ENCODE measurements at regions of chr10 and their contacts with region 1.

Region 1: GRCh38 chr10:58064714-58065528 is 202.8 kb downstream of the IPMK start:
- DNase-seq: peak in 4 of 5 donors; percentile 36 to 75 (median 64)
- H3K4me3 ChIP-seq: no peak overlapping the region
- H3K27ac ChIP-seq: no peak overlapping the region
- H3K4me1 ChIP-seq: no peaks in the 10 kb centered on the region
- H3K27me3 ChIP-seq: no peaks in the 10 kb centered on the region
- CTCF ChIP-seq: peak; percentile 69

Region 2: DNA sequence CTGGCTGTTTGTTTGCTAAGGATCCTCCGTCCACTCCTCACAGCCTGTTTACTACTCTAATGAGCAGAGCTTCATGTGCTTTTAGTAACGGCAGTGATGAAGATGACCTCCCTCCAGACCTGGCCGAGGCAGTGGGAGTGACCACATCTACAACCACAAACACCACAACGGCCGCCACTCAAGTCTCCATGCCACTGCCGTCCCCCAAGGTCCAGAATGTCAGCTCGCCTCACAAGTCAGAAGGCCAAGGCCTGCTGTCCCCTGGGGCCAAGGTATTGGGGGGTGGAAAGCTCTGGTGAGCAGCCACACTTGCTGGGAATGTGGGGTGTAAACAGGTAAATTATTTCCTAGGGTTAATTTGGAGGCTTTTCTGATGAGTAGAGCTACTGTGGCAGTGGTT is 723.6 kb before region 1 on chr10:
- intact Hi-C with region 1: loop called (anchors 10 kb)
- DNase-seq: peak in 1 of 5 donors; percentile 49
- H3K4me3 ChIP-seq: no peak overlapping the region
- H3K27ac ChIP-seq: no peak overlapping the region
- H3K4me1 ChIP-seq: no peaks in the 10 kb centered on the region
- H3K27me3 ChIP-seq: no peaks in the 10 kb centered on the region
- CTCF ChIP-seq: no peak

Region 3: DNA sequence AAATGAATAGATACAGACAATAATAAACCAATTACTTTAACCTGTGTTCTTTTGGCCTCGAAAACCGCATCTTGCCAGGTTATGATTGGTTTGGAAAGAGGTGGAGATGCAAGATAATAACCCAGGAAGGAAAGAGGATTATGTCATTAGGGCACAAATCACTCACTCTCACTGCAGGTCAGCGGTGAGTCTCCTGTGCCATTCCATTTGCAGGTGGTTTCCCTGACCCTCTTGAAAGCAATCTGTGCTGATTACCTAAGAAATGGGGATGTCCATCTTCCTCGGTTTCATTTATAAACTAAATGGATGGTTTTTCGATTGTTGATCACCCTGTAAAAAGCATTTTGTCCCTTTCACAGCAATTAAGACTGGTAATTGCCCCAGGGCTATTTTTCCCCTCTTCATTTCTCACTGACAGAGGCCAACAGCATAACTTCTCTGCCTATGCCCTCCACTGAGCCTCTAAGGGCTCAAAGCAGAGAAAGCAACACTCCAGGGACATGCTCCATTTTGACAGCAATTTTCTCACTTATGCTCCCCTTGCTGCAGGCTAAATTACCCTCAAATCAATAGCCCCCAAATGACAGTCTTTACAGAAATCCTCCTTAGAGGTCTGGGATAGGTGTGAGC is 54.7 kb before region 1 on chr10:
- intact Hi-C with region 1: no loop called
- DNase-seq: no peak
- H3K4me3 ChIP-seq: no peak overlapping the region
- H3K27ac ChIP-seq: no peak overlapping the region
- H3K4me1 ChIP-seq: no peaks in the 10 kb centered on the region
- H3K27me3 ChIP-seq: no peaks in the 10 kb centered on the region
- CTCF ChIP-seq: no peak

Measured in kidney (tissue), 22 donors.